Esophagus muscularis mucosa (tissue), 4 donors: ENCODE measurements at regions of chr3 and their contacts with region 1.

Region 1: DNA sequence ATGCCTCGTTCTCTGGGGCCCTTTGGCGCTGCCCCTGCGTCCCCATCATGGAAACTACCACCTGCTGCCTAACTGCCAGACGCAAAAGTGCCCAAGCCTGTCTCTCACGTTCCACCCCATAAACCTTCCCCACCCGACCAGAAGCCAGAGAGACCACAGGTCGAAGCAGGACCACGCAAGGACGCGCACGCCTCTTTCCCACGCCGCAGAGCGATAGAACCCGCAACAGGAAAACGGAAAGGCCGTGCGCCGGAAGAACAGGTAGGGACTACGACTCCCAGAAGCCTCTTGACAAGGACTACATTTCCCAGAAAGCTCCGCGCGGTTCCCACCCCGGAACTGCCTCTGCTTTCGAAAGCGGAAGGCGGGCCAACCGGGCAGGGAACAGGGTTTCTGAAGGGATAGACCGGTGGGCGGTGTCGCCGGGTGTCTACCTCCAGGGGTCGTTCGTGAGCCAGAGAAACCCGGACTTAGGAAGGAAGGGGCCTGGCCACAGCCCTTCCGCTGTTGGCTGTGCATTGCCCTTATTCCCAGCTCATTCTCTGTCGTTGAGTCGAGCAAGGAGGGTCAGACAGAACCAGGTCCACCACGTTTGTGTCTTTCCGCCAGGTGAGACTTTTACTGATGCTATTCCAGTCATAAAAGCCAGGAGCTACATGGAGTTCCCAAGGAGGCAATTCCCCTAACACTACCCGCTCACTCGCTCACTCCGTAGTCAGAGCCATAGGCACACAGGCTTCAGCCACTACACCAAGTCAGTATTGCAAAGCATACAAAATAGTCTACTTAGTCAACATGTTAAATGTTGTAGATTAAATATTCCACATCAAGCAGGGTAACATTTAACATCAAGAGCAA is 56.6 kb upstream of the ZBTB38 start:
- DNase-seq: peak; percentile 99
- H3K4me3 ChIP-seq: peak overlapping the region; percentile 65 to 73 (median 70)
- H3K27ac ChIP-seq: peak overlapping the region; percentile 73 to 82 (median 81)
- H3K4me1 ChIP-seq: peaks cover 6 to 15% (median 15%) of the 10 kb centered on the region in 4 donors
- H3K27me3 ChIP-seq: no peaks in the 10 kb centered on the region
- CTCF ChIP-seq: peak; percentile 57 to 78 (median 71)
- EP300 ChIP-seq: no peak
- POLR2A ChIP-seq: no peak

Region 2: DNA sequence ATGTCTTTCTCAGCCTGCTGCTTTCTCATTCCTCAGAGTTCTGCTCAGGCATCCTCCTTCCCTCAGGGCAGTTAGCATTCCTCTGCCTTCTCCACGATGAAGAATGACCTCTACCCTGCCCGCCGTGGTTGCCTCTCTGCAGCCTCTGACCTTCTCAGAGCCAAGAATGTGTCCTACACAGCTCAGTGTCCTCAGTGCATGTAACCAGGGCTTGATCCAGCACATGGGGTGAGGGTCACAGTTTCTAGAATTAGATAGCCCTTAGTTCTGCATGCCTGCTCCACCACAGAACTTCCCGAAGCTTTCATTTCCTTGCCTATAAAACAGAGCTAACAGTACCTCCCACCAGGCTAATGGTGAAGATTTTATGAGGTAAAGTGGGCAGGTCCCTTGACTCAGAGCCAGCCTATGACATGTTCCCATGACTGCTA is 1194.6 kb before region 1 on chr3:
- intact Hi-C with region 1: no loop called
- DNase-seq: no peak
- H3K4me3 ChIP-seq: no peak overlapping the region
- H3K27ac ChIP-seq: no peak overlapping the region
- H3K4me1 ChIP-seq: peaks cover 0 to 5% (median 0%) of the 10 kb centered on the region in 4 donors
- H3K27me3 ChIP-seq: no peaks in the 10 kb centered on the region
- CTCF ChIP-seq: no peak
- EP300 ChIP-seq: no peak
- POLR2A ChIP-seq: no peak

Region 3: GRCh38 chr3:141353652-141354495 is 42.1 kb after region 1 on chr3:
- intact Hi-C with region 1: loop called (anchors 5 kb)
- DNase-seq: no peak
- H3K4me3 ChIP-seq: no peak overlapping the region
- H3K27ac ChIP-seq: no peak overlapping the region
- H3K4me1 ChIP-seq: no peaks in the 10 kb centered on the region
- H3K27me3 ChIP-seq: no peaks in the 10 kb centered on the region
- CTCF ChIP-seq: no peak
- EP300 ChIP-seq: no peak
- POLR2A ChIP-seq: no peak